Activated CD8-positive, alpha-beta T cell treated with anti-CD3 and anti-CD28 coated beads, Interleukin-2, amount 10 ng/mL, durations not matched to agents 7 days and 5 days (primary cell): ENCODE measurements at regions of chr7 and their contacts with region 1.

Region 1: DNA sequence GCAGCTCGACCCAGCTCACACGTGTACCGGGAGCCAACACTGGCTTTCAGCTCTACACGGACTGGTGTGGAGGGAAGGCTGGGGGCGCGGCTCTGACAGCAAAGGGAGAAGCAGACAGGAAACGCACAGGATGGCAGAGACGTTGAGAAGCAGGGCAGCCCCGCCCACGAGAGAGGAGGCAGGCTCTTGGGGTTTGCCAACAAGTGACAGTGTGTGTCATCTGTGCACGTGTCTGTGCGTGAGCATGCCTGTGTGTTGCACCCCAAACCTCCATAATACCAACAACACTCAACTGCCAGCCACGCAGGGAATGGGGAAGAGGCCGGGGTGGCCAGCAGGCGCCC is 64.4 kb upstream of the PDGFA start:
- DNase-seq: peak; percentile 93
- ATAC-seq: peak; percentile 94
- H3K4me3 Mint-ChIP-seq: peak overlapping the region; percentile 79
- H3K27ac Mint-ChIP-seq: peak overlapping the region; percentile 92
- H3K4me1 Mint-ChIP-seq: peaks cover 37% of the 10 kb centered on the region
- H3K27me3 Mint-ChIP-seq: no peaks in the 10 kb centered on the region

Region 2: DNA sequence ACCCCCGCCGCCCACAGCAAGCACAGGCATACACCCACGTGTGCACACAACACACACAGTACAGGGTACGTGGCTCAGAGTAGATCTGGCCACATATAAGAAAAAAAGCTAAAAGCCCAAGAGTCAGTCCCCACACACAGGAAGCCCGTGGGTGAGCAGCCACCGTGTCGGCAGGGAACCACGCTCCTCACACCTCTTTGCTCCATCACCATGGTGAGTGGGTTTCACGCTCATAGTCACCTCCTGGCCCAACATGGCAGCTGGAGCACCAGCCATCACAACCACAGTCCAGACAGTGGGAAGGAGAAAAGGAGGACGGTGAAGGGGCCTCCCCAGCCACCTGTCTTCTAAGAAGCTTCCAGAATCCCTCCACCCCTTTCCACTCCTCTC is 11.5 kb after region 1 on chr7:
- CTCF ChIA-PET with region 1: no interaction called
- POLR2A ChIA-PET with region 1: interaction called, 35 read pairs
- DNase-seq: peak; percentile 42
- ATAC-seq: peak; percentile 53
- H3K4me3 Mint-ChIP-seq: no peak overlapping the region
- H3K27ac Mint-ChIP-seq: peak overlapping the region; percentile 61
- H3K4me1 Mint-ChIP-seq: peaks cover 49% of the 10 kb centered on the region
- H3K27me3 Mint-ChIP-seq: no peaks in the 10 kb centered on the region

Region 3: DNA sequence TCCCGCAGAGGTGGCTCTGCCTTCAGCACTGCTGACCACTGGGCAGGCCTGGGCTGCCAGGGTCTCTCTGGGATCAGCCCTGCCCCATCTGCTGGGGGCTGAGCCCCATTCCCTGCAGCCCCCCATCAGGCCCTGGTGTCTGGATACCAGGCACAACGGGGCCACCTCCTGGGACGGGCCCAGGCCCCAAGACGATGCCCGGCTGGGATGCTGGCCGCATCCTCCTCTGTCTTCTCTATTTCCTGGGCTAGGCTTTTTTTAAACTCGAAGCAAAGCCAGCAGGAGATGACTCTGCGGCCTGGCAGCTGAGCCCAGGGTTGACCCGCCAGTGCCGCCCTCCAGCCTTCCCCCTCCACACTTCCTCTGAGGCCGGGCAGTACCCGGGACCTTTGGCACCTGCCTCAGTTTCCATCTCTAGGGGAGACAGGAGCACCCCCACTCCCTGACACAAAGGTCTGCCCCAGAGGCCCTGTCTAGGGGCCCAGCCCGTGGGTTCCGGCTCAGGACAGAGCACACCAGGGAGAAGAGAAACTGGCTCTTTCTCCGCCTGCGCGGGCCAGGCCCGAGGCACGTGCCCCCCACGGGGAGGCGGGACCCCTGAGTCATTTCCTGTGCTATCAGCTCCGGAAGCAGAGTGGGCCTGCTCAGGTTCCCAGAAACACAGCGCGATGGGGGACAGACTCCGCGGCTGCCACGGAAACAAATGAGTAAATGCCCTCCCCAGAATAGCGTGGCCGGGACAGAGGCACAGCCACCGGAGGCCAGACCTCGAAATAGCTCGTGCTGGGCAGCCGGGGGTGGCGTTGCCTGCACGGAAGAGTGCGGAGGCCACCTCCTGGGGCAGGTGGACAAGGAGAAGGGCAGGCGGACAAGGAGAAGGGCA is 20.1 kb after region 1 on chr7:
- CTCF ChIA-PET with region 1: no interaction called
- POLR2A ChIA-PET with region 1: interaction called, 35 read pairs
- DNase-seq: peak; percentile 97
- ATAC-seq: peak; percentile 83
- H3K4me3 Mint-ChIP-seq: peak overlapping the region; percentile 92
- H3K27ac Mint-ChIP-seq: peak overlapping the region; percentile 100
- H3K4me1 Mint-ChIP-seq: peaks cover 75% of the 10 kb centered on the region
- H3K27me3 Mint-ChIP-seq: no peaks in the 10 kb centered on the region